ENCODE measurements at regions of chr9 and their contacts with region 1.

Region 1: DNA sequence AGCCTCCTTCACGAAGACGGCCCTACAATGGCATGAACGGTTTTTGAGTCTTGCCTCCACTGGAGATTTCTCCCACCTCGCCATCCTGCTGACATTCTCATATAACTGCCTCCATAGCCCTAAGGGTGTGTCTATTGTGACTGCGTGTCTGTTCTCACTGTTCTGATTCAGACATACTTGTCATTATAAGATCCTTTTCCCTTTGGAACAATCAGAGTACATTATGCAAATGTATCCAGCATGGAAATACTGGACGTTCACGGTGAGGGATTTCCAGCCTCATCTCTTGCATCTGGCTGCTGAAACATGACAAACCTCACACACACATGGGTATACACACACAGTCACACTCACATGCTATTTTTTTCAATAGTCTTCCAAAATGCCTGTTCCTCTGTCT is 402.1 kb downstream of the DIRAS2 start:
- DNase-seq: no peak
- ATAC-seq: no peak
- H3K4me3 ChIP-seq: no peak overlapping the region
- H3K27ac ChIP-seq: no peak overlapping the region
- H3K4me1 ChIP-seq: no peaks in the 10 kb centered on the region
- H3K27me3 ChIP-seq: no peaks in the 10 kb centered on the region
- CTCF ChIP-seq: no peak
- POLR2A ChIP-seq: no peak

Region 2: GRCh38 chr9:90086101-90086511 is 154.4 kb before region 1 on chr9:
- intact Hi-C with region 1: no loop called
- DNase-seq: peak in 1 of 4 donors; percentile 58
- ATAC-seq: no peak
- H3K4me3 ChIP-seq: no peak overlapping the region
- H3K27ac ChIP-seq: no peak overlapping the region
- H3K4me1 ChIP-seq: no peaks in the 10 kb centered on the region
- H3K27me3 ChIP-seq: no peaks in the 10 kb centered on the region
- CTCF ChIP-seq: no peak
- POLR2A ChIP-seq: no peak

Region 3: GRCh38 chr9:90477535-90477934 is 237.0 kb after region 1 on chr9:
- intact Hi-C with region 1: no loop called
- DNase-seq: no peak
- ATAC-seq: no peak
- H3K4me3 ChIP-seq: no peak overlapping the region
- H3K27ac ChIP-seq: no peak overlapping the region
- H3K4me1 ChIP-seq: no peaks in the 10 kb centered on the region
- H3K27me3 ChIP-seq: no peaks in the 10 kb centered on the region
- CTCF ChIP-seq: no peak
- POLR2A ChIP-seq: no peak

Region 4: DNA sequence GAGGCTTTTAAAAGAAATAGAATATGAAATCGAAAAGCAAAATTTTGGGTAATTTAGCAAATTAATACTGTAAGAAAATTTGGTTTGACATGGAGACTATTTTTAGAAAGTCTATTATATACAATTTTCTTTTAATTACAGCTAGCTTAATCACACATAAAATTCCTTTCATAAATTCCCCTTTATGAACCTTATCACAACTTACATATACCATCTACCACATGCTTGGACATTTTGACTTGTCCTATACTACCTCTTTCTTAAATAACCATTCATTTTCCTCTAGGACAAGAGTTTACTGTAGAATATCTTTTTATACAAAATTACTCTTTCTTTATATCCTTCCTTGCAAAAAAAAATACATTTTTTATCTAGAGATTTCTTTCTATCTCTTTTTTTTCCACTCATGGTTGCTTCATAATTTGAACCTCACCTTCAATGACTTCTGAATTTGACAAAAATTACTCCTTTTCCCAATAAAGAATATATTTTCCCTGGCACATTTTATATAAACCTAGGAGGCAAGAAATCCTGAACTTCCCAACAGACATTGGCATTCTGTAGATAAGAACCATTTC is 527.1 kb after region 1 on chr9:
- intact Hi-C with region 1: loop called (anchors 10 kb)
- DNase-seq: no peak
- ATAC-seq: no peak
- H3K4me3 ChIP-seq: no peak overlapping the region
- H3K27ac ChIP-seq: no peak overlapping the region
- H3K4me1 ChIP-seq: no peaks in the 10 kb centered on the region
- H3K27me3 ChIP-seq: no peaks in the 10 kb centered on the region
- CTCF ChIP-seq: no peak
- POLR2A ChIP-seq: no peak

Measured in body of pancreas (tissue), 4 donors.